ENCODE measurements at regions of chr14 and their contacts with region 1.

Region 1: GRCh38 chr14:87944987-87945604 is 47.9 kb downstream of the GALC start:
- DNase-seq: peak in 5 of 14 experiments; percentile 4 to 80 (median 68)
- ATAC-seq: peak; percentile 43
- H3K4me3 ChIP-seq: no peak overlapping the region
- H3K4me3 Mint-ChIP-seq: no peak overlapping the region
- H3K27ac ChIP-seq: no peak overlapping the region
- H3K27ac Mint-ChIP-seq: no peak overlapping the region
- H3K4me1 ChIP-seq: no peaks in the 10 kb centered on the region
- H3K4me1 Mint-ChIP-seq: peaks cover 8% of the 10 kb centered on the region
- H3K27me3 ChIP-seq: no peaks in the 10 kb centered on the region
- H3K27me3 Mint-ChIP-seq: no peaks in the 10 kb centered on the region
- CTCF ChIP-seq: peak; percentile 83

Region 2: DNA sequence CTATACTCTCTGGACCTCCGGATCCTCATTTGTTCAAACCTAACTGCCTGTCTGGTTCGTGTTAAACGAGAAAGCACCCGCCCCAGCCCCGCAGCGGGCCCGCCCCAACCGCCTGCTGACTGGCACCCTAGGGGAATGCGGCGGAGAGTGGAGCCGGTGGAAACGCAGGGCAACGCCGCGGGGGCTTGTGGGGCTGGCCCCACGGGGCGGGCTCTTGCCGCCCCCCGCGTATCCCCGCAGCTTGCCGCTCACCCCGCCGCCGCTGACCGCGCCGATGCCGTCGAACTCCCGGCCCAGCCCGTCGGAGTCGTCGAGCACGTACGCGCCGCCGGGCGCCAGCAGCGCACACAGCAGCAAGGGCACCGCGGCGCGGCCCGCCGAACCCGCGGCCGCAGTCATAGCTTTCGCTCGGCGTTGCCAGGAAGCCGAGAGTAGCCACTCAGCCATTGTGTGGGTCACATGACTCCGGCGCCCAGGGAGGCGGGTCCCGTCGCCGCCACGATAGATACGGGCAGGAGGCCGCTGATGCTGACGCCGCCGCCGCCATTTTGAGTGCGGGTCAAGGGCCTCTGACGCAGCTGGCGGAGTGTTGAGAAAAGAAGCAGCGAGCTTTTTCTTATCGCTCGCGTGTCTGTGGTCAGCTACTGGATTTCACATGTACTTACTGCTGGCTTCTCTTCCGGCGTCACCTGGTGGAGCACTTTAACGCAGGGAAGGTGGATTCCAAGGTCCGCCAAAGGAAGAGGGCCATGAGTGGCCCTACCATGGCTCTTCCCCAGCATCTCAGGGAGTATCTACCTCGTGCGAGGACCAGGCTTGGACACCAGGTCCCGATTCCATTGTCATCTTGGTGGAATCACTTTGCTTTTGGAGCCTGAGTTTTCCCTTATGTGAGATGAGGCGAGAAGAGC is 47.9 kb after region 1 on chr14 and contains the start of gene GALC:
- CTCF ChIA-PET with region 1: interaction called, 10 read pairs
- POLR2A ChIA-PET with region 1: interaction called, 49 read pairs
- intact Hi-C with region 1: loop called (anchors 5 kb)
- DNase-seq: peak; percentile 92 to 98 (median 94)
- ATAC-seq: peak; percentile 85
- H3K4me3 ChIP-seq: peak within 1 kb of the TSS; percentile 66
- H3K4me3 Mint-ChIP-seq: peak within 1 kb of the TSS; percentile 92
- H3K27ac ChIP-seq: peak within 1 kb of the TSS; percentile 88 to 95
- H3K27ac Mint-ChIP-seq: peak within 1 kb of the TSS; percentile 99
- H3K4me1 ChIP-seq: peaks cover 41% of the 10 kb centered on the region
- H3K4me1 Mint-ChIP-seq: peaks cover 76% of the 10 kb centered on the region
- H3K27me3 ChIP-seq: no peaks in the 10 kb centered on the region
- H3K27me3 Mint-ChIP-seq: no peaks in the 10 kb centered on the region
- CTCF ChIP-seq: no peak
- total RNA-seq, gene GALC: 14.7 to 14.9 TPM

Region 3: DNA sequence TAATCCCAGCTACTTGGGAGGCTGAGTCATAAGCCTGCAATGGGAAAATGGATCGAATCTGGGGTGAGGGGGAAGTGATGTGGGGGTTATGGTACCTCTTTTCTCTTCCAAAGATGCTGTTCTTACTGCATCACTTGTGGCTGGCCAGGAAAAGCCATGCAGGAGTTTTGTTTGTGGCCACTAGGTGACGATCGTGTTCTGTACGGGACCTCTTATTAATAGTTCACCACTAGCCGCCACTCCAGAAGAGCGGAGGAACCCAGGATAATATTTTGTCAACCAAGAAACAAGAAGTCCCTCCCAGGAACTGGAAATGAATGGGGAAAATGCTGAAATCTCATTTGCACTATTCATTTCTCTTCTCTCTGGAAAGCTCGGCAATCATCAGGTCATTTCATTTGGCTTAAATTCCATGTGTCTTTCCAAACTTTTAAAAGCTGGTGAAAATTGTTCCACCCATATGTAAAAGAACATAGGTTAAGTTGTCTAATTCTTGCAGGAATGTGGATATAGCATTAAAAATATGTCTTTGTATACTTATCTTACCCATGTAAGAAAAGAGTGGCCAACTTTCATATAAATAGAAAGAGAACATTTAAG is 68.8 kb after region 1 on chr14:
- CTCF ChIA-PET with region 1: no interaction called
- POLR2A ChIA-PET with region 1: no interaction called
- intact Hi-C with region 1: loop called in 1 of 2 experiments (anchors 5 kb)
- DNase-seq: peak in 10 of 14 experiments; percentile 7 to 74 (median 26)
- ATAC-seq: peak; percentile 52
- H3K4me3 ChIP-seq: no peak overlapping the region
- H3K4me3 Mint-ChIP-seq: no peak overlapping the region
- H3K27ac ChIP-seq: no peak overlapping the region
- H3K27ac Mint-ChIP-seq: peak overlapping the region; percentile 70
- H3K4me1 ChIP-seq: peaks cover 15% of the 10 kb centered on the region
- H3K4me1 Mint-ChIP-seq: peaks cover 78% of the 10 kb centered on the region
- H3K27me3 ChIP-seq: no peaks in the 10 kb centered on the region
- H3K27me3 Mint-ChIP-seq: no peaks in the 10 kb centered on the region
- CTCF ChIP-seq: peak; percentile 62

Region 4: GRCh38 chr14:88233915-88234314 is 288.8 kb after region 1 on chr14:
- CTCF ChIA-PET with region 1: no interaction called
- POLR2A ChIA-PET with region 1: no interaction called
- intact Hi-C with region 1: loop called in 1 of 2 experiments (anchors 1 kb)
- DNase-seq: peak in 3 of 14 experiments; percentile 7 to 19 (median 10)
- ATAC-seq: no peak
- H3K4me3 ChIP-seq: no peak overlapping the region
- H3K4me3 Mint-ChIP-seq: no peak overlapping the region
- H3K27ac ChIP-seq: no peak overlapping the region
- H3K27ac Mint-ChIP-seq: no peak overlapping the region
- H3K4me1 ChIP-seq: no peaks in the 10 kb centered on the region
- H3K4me1 Mint-ChIP-seq: no peaks in the 10 kb centered on the region
- H3K27me3 ChIP-seq: peaks cover under 1 to 3% of the 10 kb centered on the region in 2 experiments
- H3K27me3 Mint-ChIP-seq: peaks cover 28% of the 10 kb centered on the region
- CTCF ChIP-seq: no peak

Region 5: DNA sequence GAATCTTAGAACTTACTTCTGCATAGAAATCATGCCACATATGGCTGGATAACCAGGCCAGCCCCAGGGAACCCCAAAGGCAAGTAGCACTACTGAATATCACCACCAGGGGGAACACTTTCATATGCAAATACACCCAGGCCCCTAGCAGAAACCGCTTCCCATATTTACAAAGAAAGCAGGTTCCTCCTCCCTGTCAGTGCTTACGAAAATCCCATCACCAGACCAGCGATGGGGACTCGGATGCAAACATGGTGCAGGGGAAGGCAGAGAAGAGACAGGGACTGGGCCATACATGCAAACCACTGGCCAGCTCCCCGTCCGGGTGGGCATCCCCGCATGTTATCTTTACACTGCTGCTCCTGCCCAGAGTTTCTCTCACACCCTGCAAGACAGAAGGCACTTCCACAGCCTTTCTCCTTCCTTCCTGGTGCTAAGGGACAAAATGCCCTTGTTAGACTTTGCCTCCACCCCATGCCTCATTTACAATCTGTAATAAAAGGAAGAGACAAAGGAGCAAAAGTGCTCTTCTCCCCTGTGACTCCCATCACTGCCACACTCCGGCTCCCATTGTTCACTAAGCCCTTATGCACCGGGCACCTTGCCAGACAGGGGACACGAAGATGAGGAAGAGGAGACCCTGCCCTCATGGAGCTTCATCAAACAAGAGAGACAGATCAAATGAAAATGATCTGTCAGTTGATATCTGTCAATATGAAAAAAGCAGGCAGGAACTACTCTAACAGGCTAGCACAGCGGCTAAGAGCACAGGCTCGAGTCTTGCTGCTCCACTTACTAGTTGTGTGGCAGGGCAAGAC is 547.4 kb after region 1 on chr14:
- CTCF ChIA-PET with region 1: no interaction called
- POLR2A ChIA-PET with region 1: no interaction called
- intact Hi-C with region 1: loop called in 1 of 2 experiments (anchors 5 kb)
- DNase-seq: peak; percentile 22 to 80 (median 47)
- ATAC-seq: peak; percentile 72
- H3K4me3 ChIP-seq: no peak overlapping the region
- H3K4me3 Mint-ChIP-seq: no peak overlapping the region
- H3K27ac ChIP-seq: no peak overlapping the region
- H3K27ac Mint-ChIP-seq: no peak overlapping the region
- H3K4me1 ChIP-seq: no peaks in the 10 kb centered on the region
- H3K4me1 Mint-ChIP-seq: no peaks in the 10 kb centered on the region
- H3K27me3 ChIP-seq: no peaks in the 10 kb centered on the region
- H3K27me3 Mint-ChIP-seq: peaks cover 5% of the 10 kb centered on the region
- CTCF ChIP-seq: peak; percentile 85

Region 6: DNA sequence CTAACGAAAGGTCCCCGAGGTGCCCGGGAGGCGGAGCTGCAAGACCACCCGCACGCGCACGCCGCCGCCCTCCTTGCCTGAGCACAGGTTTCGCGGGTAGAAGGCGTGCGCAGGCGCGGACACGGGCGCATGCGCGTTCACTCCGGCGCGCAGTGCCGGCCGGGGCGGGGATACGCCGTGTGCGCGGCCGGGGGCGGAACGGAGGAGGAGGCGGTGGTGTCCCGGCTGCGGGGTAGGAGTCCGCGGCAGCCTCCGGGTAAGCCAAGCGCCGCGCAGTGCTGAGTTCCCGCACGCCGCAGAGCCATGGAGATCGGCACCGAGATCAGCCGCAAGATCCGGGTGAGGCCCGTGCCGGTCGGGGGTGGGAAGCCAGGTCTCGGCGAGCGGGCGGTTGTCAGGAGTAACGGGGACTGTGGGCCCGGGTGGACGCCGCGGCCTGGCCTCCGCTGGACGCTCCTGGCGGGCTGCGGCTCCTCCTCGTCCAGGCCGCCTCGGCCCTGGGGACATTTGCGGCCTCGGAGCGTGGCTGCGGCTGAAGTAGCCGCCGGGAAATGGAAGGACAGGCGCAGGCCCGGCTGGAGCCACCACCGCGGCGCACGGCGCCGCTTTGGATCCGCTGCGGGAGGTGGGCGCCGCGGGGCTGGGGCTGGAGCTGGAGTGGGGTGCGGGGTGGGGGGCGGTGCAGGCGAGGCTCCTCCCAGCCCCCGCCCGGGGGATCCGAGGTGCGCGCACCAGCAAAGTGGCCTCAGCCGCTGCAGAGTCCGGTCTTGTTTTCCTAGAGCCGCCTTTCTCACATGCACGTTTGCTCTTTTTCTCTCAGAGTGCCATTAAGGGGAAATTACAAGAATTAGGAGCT is 618.0 kb after region 1 on chr14 and contains the start of gene ZC3H14:
- CTCF ChIA-PET with region 1: no interaction called
- POLR2A ChIA-PET with region 1: no interaction called
- intact Hi-C with region 1: loop called (anchors 10 kb)
- DNase-seq: peak; percentile 73 to 95 (median 84)
- ATAC-seq: peak; percentile 96
- H3K4me3 ChIP-seq: peak within 1 kb of the TSS; percentile 77
- H3K4me3 Mint-ChIP-seq: peak within 1 kb of the TSS; percentile 97
- H3K27ac ChIP-seq: peak within 1 kb of the TSS in 1 of 2 donors; percentile 35
- H3K27ac Mint-ChIP-seq: peak within 1 kb of the TSS; percentile 67
- H3K4me1 ChIP-seq: peaks cover 13% of the 10 kb centered on the region
- H3K4me1 Mint-ChIP-seq: peaks cover 37% of the 10 kb centered on the region
- H3K27me3 ChIP-seq: no peaks in the 10 kb centered on the region
- H3K27me3 Mint-ChIP-seq: peaks cover 8% of the 10 kb centered on the region
- CTCF ChIP-seq: no peak
- total RNA-seq, gene ZC3H14: 36.5 to 40.2 TPM

Measured in CD4-positive, alpha-beta T cell (primary cell).